Activated CD4-positive, alpha-beta memory T cell treated with anti-CD3 and anti-CD28 coated beads, Interleukin-2, amount 10 ng/mL, durations not matched to agents 7 days and 5 days (primary cell): ENCODE measurements at regions of chr1 and their contacts with region 1.

Region 1: GRCh38 chr1:225999227-225999911 is at the start of gene SDE2:
- DNase-seq: peak; percentile 100
- H3K4me3 Mint-ChIP-seq: peak within 1 kb of the TSS; percentile 100
- H3K27ac Mint-ChIP-seq: peak within 1 kb of the TSS; percentile 100
- H3K4me1 Mint-ChIP-seq: peaks cover 71% of the 10 kb centered on the region
- H3K27me3 Mint-ChIP-seq: no peaks in the 10 kb centered on the region
- total RNA-seq, gene SDE2: 19.8 to 20.1 TPM

Region 2: GRCh38 chr1:225428068-225428880 is 571.1 kb before region 1 on chr1:
- CTCF ChIA-PET with region 1: no interaction called
- POLR2A ChIA-PET with region 1: interaction called, 14 read pairs
- DNase-seq: peak; percentile 95
- H3K4me3 Mint-ChIP-seq: peak overlapping the region; percentile 89
- H3K27ac Mint-ChIP-seq: peak overlapping the region; percentile 89
- H3K4me1 Mint-ChIP-seq: peaks cover 54% of the 10 kb centered on the region
- H3K27me3 Mint-ChIP-seq: peaks cover 2% of the 10 kb centered on the region

Region 3: GRCh38 chr1:225467193-225468020 is 532.0 kb before region 1 on chr1:
- CTCF ChIA-PET with region 1: no interaction called
- POLR2A ChIA-PET with region 1: interaction called, 32 read pairs
- DNase-seq: peak; percentile 91
- H3K4me3 Mint-ChIP-seq: peak overlapping the region; percentile 91
- H3K27ac Mint-ChIP-seq: peak overlapping the region; percentile 99
- H3K4me1 Mint-ChIP-seq: peaks cover 64% of the 10 kb centered on the region
- H3K27me3 Mint-ChIP-seq: no peaks in the 10 kb centered on the region

Region 4: DNA sequence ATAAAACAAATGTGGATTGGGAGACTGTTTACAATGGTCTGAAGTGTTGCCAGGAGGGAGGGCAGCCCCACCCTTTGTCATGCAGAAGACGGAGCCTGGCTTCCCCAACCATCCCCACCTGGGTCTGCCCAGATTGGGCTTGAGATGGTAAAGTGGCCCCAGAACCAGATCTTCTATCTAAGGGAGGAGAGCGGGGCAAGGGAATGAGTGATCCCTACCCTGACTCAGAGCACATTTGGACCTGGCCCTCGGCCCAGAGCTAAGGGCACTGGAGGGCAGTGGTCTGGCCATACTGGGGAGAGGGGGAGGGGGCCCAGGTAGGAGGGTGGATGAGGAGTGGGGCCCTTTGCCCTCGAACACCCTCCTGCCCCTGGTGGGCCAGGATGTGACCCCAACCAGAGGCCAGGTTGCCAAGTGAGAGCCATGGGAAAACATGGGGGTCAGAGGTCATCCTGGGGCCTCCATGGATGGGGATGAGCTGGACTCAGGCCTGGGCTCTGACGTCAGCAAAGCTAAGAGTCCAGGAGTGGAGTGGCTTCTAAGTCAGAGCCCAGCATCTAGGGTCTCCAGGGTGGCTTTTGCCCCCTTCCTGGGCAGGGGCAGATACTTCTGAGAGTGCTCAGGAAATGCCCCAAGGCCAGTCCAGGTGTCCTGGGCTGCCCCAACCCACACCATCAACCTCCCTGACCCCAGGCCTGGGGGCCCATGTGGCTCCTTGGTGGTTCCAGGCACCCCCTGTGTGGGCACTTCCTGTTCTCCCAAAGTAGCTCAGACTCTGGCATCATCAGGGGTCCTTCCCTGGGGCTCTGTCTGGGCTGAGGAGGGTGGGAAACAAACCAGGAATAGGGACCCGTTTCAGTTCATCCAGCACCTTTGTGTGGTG is 108.8 kb before region 1 on chr1:
- CTCF ChIA-PET with region 1: no interaction called
- POLR2A ChIA-PET with region 1: no interaction called
- DNase-seq: no peak
- H3K4me3 Mint-ChIP-seq: no peak overlapping the region
- H3K27ac Mint-ChIP-seq: no peak overlapping the region
- H3K4me1 Mint-ChIP-seq: peaks cover 7% of the 10 kb centered on the region
- H3K27me3 Mint-ChIP-seq: peaks cover 14% of the 10 kb centered on the region

Region 5: DNA sequence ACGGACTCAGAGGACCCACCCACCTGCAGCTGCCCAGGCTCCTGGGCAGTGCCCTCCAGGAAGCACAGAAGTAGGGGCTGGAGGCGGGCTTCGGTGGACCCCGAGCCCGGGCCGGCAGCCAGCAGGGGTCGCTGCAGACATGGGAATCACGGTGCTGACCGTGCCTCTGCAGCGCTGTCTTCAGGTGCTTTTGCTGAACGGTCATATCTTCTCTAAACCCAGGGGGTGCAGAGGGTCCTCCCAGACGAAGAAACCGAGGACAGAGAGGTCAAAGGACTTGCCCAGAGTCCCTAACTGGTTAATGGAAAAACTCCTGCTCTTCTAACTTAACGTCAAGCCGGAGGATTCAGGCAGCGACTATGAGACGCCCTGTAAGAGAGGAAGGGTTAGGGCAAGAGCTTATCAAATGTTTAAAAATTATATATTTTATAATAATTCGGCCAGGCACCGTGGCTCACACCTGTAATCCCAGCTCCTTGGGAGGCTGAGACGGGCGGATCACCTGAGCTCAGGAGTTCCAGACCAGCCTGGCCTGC is 36.9 kb before region 1 on chr1:
- CTCF ChIA-PET with region 1: no interaction called
- POLR2A ChIA-PET with region 1: no interaction called
- DNase-seq: peak; percentile 60
- H3K4me3 Mint-ChIP-seq: no peak overlapping the region
- H3K27ac Mint-ChIP-seq: no peak overlapping the region
- H3K4me1 Mint-ChIP-seq: no peaks in the 10 kb centered on the region
- H3K27me3 Mint-ChIP-seq: no peaks in the 10 kb centered on the region

Region 6: GRCh38 chr1:225987491-225988316 is 11.7 kb before region 1 on chr1:
- CTCF ChIA-PET with region 1: interaction called, 32 read pairs
- POLR2A ChIA-PET with region 1: interaction called, 30 read pairs
- DNase-seq: no peak
- H3K4me3 Mint-ChIP-seq: no peak overlapping the region
- H3K27ac Mint-ChIP-seq: peak overlapping the region; percentile 4
- H3K4me1 Mint-ChIP-seq: peaks cover 35% of the 10 kb centered on the region
- H3K27me3 Mint-ChIP-seq: no peaks in the 10 kb centered on the region

Region 7: GRCh38 chr1:226083302-226084101 is 84.1 kb after region 1 on chr1:
- CTCF ChIA-PET with region 1: no interaction called
- POLR2A ChIA-PET with region 1: interaction called, 15 read pairs
- DNase-seq: peak; percentile 91
- H3K4me3 Mint-ChIP-seq: peak overlapping the region; percentile 93
- H3K27ac Mint-ChIP-seq: peak overlapping the region; percentile 54
- H3K4me1 Mint-ChIP-seq: peaks cover 8% of the 10 kb centered on the region
- H3K27me3 Mint-ChIP-seq: peaks cover 6% of the 10 kb centered on the region

Region 8: DNA sequence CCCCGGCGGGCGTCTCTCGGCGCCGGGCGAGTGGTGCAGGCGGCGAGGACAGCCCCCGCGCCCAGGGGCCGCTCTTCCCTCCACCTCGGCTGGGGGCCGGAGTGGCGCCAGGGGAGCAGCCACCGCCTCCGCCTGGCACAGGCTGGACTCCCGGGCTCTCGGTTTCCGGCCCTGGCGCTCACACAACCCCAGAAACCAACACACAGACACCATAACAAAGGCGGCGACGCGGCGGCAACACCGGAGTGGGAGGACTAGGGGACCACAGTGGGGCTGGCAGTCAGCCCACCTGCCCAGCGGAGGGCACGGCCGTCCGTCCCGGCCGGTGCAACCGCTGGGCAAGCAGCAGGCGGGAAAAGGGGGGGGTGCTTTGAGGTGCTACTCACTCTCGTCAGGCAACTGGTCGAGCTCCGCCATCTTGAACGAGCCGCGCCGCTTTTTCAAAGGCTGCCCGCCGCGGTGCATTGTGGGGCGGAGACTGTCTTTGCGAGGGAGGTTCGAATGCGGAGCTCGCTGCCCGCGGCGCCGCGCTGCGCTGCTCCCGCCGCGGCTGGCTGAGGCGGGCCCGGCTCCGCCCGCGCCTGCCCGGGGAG is 309.4 kb after region 1 on chr1 and contains the start of gene LIN9:
- CTCF ChIA-PET with region 1: no interaction called
- POLR2A ChIA-PET with region 1: interaction called, 12 read pairs
- DNase-seq: peak; percentile 94
- H3K4me3 Mint-ChIP-seq: peak within 1 kb of the TSS; percentile 89
- H3K27ac Mint-ChIP-seq: peak within 1 kb of the TSS; percentile 87
- H3K4me1 Mint-ChIP-seq: peaks cover 32% of the 10 kb centered on the region
- H3K27me3 Mint-ChIP-seq: peaks cover 13% of the 10 kb centered on the region
- total RNA-seq, gene LIN9: 10.4 to 11.5 TPM